ENCODE measurements at regions of chr3 and their contacts with region 1.

Region 1: GRCh38 chr3:150135287-150135721 is 164.6 kb upstream of the PFN2 start:
- DNase-seq: no peak
- H3K4me3 ChIP-seq: no peak overlapping the region
- H3K27ac ChIP-seq: no peak overlapping the region
- H3K4me1 ChIP-seq: peaks cover 0 to 5% (median 0%) of the 10 kb centered on the region in 4 donors
- H3K27me3 ChIP-seq: no peaks in the 10 kb centered on the region
- CTCF ChIP-seq: no peak
- EP300 ChIP-seq: peak; percentile 34
- POLR2A ChIP-seq: no peak

Region 2: GRCh38 chr3:149784064-149784704 is 351.1 kb before region 1 on chr3:
- intact Hi-C with region 1: no loop called
- DNase-seq: no peak
- H3K4me3 ChIP-seq: no peak overlapping the region
- H3K27ac ChIP-seq: peak overlapping the region in 1 of 5 donors; percentile 33
- H3K4me1 ChIP-seq: peaks cover 0 to 16% (median 0%) of the 10 kb centered on the region in 4 donors
- H3K27me3 ChIP-seq: no peaks in the 10 kb centered on the region
- CTCF ChIP-seq: no peak
- EP300 ChIP-seq: no peak
- POLR2A ChIP-seq: no peak

Region 3: DNA sequence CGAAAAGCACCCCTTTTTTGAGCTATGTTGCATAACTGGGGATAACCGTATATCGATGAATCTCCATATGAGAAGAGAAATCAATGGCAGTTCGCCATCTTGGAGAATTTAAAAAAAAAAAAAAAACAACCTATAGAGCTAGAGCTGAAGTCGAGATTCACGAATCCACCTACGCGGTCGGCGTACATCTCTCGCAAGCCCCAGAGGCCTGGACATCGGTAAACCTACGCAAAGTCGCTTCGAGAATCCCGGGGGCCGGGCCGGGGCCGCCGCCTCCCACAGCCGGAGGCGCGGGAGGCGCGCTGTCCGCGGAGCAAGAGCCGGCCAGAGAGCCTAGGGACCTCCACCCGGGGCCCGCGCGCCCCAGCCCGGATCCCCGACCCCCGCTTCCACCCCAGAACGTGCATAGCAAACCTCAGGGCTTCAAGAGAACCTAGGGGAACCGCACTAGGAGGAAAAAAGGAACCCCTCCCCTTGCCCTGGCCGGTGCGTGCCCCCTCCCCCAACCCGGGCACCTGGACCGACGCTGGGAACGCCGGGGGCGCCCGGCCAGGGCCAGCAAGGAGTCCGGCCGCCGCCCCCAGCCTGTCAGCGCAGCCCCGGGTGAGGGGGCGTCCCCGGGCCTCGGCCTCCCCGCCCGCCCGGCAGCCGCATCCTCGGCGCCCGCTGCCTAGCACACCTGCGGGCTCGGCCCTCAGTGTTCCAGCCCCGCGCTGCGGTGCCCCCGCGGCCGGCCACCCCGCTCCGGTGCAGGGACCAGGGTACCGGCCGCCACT is 165.2 kb before region 1 on chr3:
- intact Hi-C with region 1: no loop called
- DNase-seq: peak; percentile 88 to 97
- H3K4me3 ChIP-seq: peak overlapping the region; percentile 83 to 96 (median 92)
- H3K27ac ChIP-seq: peak overlapping the region; percentile 87 to 97 (median 88)
- H3K4me1 ChIP-seq: peaks cover 4 to 35% (median 31%) of the 10 kb centered on the region in 4 donors
- H3K27me3 ChIP-seq: peaks cover 0 to 30% (median 0%) of the 10 kb centered on the region in 3 donors
- CTCF ChIP-seq: no peak
- EP300 ChIP-seq: no peak
- POLR2A ChIP-seq: no peak

Region 4: DNA sequence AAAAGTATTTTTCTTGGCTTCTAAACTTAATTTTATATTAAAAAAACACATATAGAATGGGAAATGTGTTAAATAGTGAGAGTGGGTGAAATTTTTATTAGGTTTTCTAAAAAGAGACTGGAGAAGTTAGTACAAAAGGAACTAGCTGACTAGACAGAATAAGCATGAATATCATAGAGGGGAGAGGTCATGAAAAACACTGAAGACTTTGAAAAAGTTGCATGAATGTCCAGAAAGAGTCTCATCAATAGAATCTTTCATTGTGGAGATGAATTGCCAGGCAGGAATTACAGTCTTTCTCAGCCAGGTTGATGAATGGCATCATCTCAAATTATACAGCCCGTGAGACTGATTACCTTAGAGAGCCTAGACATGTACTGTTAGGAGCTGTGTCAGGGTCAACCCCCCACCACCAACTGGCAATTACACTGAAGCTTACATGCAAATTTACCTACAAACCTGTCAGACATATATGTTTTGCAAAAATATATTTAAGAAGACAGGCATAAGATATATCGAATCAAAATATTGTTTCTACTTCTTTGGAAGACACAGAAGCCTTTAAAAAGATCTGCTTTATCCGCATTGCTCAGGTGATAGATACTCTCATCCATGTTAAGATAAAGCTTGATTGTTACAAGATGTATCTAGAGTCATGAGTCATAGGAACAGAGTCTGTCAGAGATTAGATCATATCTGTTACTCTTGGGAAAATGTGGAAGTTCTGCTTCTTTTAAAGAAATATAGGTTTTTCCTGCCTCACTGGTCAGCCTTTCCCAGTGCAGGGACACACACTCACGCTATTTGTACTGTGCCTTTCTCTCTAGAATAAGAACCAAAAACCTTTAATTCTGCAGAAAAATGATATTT is 129.8 kb before region 1 on chr3:
- intact Hi-C with region 1: loop called (anchors 5 kb)
- DNase-seq: no peak
- H3K4me3 ChIP-seq: no peak overlapping the region
- H3K27ac ChIP-seq: no peak overlapping the region
- H3K4me1 ChIP-seq: no peaks in the 10 kb centered on the region
- H3K27me3 ChIP-seq: no peaks in the 10 kb centered on the region
- CTCF ChIP-seq: no peak
- EP300 ChIP-seq: no peak
- POLR2A ChIP-seq: no peak